AG04450 (cell line): ENCODE measurements at regions of chr2 and their contacts with region 1.

Region 1: DNA sequence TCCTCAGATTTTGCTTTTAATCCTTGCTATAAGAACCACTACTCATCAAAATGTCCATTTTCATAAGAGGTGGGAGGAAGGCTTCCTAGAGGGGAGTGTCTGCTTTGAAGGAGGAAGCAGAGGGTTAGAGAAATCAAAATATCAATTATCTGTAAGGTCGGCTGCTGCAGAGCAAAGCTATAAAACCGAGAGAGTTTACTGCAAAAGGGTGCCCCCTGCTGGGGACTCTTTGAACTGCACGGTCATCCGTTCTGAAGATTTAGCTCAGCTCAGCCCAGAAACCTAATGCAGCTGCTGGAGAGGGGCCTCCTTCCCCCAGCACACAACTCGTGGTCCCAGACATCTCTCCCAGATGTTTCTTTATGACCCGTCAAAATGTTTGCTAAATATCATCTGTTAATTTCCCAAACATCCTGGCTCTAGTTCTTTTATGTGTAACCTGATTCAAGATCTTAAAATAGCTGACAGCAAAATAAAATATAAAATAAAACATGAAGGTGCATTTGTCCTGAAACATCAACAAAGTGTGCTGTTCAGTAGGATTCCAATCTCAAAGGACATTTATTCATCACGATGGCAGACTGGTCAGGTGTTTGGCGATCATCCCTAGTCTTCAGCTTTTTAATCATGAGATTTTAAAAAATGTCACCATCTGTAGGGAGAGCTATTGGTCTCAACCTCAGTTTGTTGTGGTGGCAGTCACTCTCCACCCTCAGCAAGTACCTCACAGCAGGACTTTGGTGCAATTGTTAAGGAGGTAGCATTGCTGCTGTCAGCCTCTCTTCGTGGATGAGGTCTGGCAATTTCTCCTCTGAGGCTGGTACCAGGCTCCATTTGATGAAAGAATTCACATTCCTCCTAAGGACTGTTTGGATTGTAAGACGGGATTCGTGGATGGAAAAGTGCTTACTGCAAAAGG is 185.9 kb downstream of the MTX2 start:
- DNase-seq: peak; percentile 45
- H3K4me3 ChIP-seq: no peak overlapping the region
- H3K27ac ChIP-seq: no peak overlapping the region
- H3K27me3 ChIP-seq: no peaks in the 10 kb centered on the region
- CTCF ChIP-seq: peak; percentile 92

Region 2: GRCh38 chr2:176140513-176141317 is 314.4 kb before region 1 on chr2:
- CTCF ChIA-PET with region 1: interaction called, 114 read pairs
- POLR2A ChIA-PET with region 1: no interaction called
- DNase-seq: peak; percentile 4
- H3K4me3 ChIP-seq: peak overlapping the region; percentile 58
- H3K27ac ChIP-seq: no peak overlapping the region
- H3K27me3 ChIP-seq: peaks cover 78% of the 10 kb centered on the region
- CTCF ChIP-seq: peak; percentile 73

Region 3: GRCh38 chr2:176246341-176246740 is 208.8 kb before region 1 on chr2:
- CTCF ChIA-PET with region 1: interaction called, 11 read pairs
- POLR2A ChIA-PET with region 1: no interaction called
- DNase-seq: no peak
- H3K4me3 ChIP-seq: no peak overlapping the region
- H3K27ac ChIP-seq: no peak overlapping the region
- H3K27me3 ChIP-seq: peaks cover 4% of the 10 kb centered on the region
- CTCF ChIP-seq: no peak

Region 4: GRCh38 chr2:176421297-176422050 is 33.7 kb before region 1 on chr2:
- CTCF ChIA-PET with region 1: interaction called, 16 read pairs
- POLR2A ChIA-PET with region 1: no interaction called
- DNase-seq: no peak
- H3K4me3 ChIP-seq: no peak overlapping the region
- H3K27ac ChIP-seq: no peak overlapping the region
- H3K27me3 ChIP-seq: no peaks in the 10 kb centered on the region
- CTCF ChIP-seq: no peak

Region 5: GRCh38 chr2:176479961-176480360 is 24.8 kb after region 1 on chr2:
- CTCF ChIA-PET with region 1: interaction called, 55 read pairs
- POLR2A ChIA-PET with region 1: no interaction called
- DNase-seq: no peak
- H3K4me3 ChIP-seq: no peak overlapping the region
- H3K27ac ChIP-seq: no peak overlapping the region
- H3K27me3 ChIP-seq: peaks cover 13% of the 10 kb centered on the region
- CTCF ChIP-seq: no peak

Region 6: DNA sequence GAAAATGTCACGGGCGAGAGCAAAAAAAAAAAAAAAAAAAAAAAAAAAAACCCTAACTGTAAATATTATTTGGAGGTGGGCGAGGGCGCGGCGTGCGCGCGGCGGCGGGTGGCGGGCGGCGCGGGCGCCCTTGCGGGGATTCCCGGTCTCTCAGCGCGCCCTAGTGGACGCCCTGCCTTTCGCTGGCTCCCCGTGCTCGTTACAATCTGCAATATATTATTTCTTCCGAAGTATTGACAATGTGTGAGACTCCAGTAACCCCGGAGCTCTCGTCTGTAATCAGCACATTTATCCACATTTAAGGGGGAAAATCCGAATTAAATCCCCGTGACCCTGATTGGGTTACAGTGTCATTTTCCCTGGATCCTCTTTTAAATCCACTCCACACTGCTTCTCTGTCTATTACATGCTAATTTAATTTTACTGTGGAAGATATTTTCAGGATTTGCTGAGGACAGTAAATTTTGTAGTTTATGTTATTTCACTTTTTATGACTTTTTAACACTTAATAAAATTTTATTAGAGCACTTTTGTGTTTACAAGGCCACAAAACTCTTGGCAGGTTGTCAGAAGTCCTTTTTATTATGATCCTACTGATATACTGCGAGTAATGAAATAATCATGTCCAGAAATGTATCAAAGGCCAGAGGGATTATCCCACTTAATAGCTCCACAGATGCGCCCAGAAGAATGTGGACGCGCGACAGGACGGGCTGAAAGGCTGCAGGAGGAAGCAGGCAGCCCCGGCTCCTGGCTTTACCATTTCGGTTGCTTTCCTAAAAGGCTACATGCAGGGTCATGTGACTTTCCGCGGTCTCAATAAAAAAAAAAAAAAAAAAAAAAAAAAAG is 183.2 kb after region 1 on chr2:
- CTCF ChIA-PET with region 1: interaction called, 17 read pairs
- POLR2A ChIA-PET with region 1: no interaction called
- DNase-seq: peak; percentile 6
- H3K4me3 ChIP-seq: peak overlapping the region; percentile 63
- H3K27ac ChIP-seq: no peak overlapping the region
- H3K27me3 ChIP-seq: peaks cover 4% of the 10 kb centered on the region
- CTCF ChIP-seq: peak; percentile 69

Region 7: GRCh38 chr2:176682278-176682677 is 227.1 kb after region 1 on chr2:
- CTCF ChIA-PET with region 1: no interaction called
- POLR2A ChIA-PET with region 1: no interaction called
- DNase-seq: no peak
- H3K4me3 ChIP-seq: no peak overlapping the region
- H3K27ac ChIP-seq: no peak overlapping the region
- H3K27me3 ChIP-seq: no peaks in the 10 kb centered on the region
- CTCF ChIP-seq: no peak